ENCODE measurements at regions of chr11 and their contacts with region 1.

Region 1: DNA sequence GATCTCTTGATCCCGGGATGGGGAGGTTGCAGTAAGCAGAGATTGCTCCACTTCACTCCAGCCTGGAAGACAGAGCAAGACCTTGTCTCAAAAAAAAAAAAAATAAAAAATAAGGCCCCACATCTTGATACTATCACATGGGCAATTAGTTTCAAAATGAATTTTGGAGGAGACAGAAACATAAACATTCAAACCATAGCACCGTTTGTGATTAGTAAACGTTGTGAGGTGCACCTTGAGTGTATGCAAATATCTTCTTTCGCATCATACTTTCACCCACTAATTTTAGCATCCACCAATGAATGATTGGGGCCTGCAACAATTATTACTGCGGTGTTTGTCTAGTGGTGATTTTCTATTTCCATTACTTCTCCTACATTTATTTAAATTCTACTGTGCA is 11.0 kb upstream of the SPDYC start:
- DNase-seq: no peak
- ATAC-seq: no peak
- H3K4me3 ChIP-seq: no peak overlapping the region
- H3K27ac ChIP-seq: no peak overlapping the region
- H3K4me1 ChIP-seq: no peaks in the 10 kb centered on the region
- H3K27me3 ChIP-seq: no peaks in the 10 kb centered on the region
- CTCF ChIP-seq: no peak

Region 2: DNA sequence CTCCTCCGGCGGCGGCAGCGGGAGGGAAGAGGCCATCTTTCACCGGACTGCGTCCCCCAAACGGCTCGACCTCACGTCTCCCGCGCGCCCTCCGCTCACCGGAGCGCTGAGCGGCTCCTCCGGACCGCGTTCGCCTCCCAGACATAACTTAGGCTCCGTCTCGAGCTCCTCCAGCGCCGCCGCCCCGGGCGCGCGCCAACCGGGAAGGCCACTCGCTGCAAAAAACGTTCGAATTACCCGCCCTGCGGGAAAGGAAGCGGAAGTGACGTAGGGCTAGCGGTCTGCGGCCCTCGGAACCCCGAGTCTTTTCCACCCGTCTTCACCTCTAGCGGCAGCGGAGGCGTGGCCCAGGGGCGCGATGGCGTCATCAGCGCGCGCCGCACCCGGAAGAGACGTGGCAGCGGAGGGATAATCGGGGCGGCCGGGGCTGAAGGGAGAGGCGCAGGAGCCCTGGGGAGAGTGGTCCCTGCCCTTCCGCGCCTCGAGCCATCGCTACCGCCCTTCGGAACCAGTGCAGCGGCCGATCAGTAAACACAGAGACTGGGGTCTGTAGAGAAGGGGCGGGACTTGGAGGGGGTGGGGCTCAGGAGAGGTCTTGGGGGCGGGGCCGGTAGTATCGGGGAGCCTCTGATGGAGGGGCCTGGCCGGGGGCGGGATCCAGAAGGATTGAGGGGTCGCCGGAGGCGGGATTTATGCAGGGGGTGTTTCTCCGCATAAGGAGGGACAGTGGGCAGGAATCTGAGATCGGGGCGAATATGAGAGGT is 75.0 kb before region 1 on chr11 and contains the starts of genes CDCA5 and ZFPL1:
- CTCF ChIA-PET with region 1: no interaction called
- POLR2A ChIA-PET with region 1: interaction called, 13 read pairs
- in situ Hi-C with region 1: no loop called
- intact Hi-C with region 1: no loop called
- DNase-seq: peak; percentile 73
- ATAC-seq: peak; percentile 98
- H3K4me3 ChIP-seq: peak within 1 kb of the TSS; percentile 81 to 99
- H3K27ac ChIP-seq: peak within 1 kb of the TSS; percentile 96
- H3K4me1 ChIP-seq: peaks cover 20% of the 10 kb centered on the region
- H3K27me3 ChIP-seq: no peaks in the 10 kb centered on the region
- CTCF ChIP-seq: no peak
- total RNA-seq, gene CDCA5: 92.9 TPM
- total RNA-seq, gene ZFPL1: 68.4 TPM

Region 3: DNA sequence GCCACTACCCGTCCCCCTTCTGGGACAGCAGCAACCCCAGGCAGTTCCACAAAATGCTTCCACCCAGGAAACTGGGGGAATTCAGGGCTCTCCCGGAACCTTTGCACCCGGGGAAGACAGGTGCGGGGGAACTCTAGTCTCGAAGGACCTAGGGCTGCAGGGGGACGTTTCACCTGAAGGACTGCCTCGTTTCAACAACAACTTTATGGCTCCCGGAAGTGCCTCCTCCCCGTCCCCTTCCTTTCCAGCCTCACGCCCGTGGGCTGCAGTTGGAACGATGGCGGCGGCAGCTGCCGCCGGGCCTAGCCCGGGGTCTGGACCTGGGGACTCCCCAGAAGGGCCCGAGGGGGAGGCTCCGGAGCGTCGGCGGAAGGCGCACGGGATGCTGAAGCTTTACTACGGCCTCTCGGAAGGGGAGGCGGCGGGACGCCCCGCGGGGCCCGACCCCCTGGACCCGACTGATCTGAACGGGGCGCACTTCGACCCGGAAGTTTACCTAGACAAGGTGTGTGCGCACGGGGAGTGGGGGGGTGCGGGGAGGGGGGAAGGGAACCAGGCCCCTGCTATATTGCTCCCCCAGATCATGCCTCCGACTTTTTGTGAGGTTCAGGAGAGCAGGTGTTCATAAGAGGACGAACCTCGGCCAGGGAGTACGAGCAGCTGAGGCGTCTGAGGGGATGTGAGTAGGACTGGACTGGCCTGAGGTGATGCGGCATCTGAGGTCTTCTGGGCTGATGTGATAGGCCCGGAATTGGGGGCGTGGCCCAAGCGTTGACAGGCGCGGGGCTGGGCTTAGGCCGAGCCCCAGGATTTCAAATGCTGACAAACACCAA is 62.8 kb before region 1 on chr11 and contains the start of gene VPS51:
- CTCF ChIA-PET with region 1: no interaction called
- POLR2A ChIA-PET with region 1: interaction called, 12 read pairs
- in situ Hi-C with region 1: no loop called
- intact Hi-C with region 1: no loop called
- DNase-seq: no peak
- ATAC-seq: peak; percentile 97
- H3K4me3 ChIP-seq: peak within 1 kb of the TSS; percentile 63 to 88
- H3K27ac ChIP-seq: peak within 1 kb of the TSS; percentile 80
- H3K4me1 ChIP-seq: peaks cover 5% of the 10 kb centered on the region
- H3K27me3 ChIP-seq: no peaks in the 10 kb centered on the region
- CTCF ChIP-seq: no peak
- total RNA-seq, gene VPS51: 101 TPM

Region 4: DNA sequence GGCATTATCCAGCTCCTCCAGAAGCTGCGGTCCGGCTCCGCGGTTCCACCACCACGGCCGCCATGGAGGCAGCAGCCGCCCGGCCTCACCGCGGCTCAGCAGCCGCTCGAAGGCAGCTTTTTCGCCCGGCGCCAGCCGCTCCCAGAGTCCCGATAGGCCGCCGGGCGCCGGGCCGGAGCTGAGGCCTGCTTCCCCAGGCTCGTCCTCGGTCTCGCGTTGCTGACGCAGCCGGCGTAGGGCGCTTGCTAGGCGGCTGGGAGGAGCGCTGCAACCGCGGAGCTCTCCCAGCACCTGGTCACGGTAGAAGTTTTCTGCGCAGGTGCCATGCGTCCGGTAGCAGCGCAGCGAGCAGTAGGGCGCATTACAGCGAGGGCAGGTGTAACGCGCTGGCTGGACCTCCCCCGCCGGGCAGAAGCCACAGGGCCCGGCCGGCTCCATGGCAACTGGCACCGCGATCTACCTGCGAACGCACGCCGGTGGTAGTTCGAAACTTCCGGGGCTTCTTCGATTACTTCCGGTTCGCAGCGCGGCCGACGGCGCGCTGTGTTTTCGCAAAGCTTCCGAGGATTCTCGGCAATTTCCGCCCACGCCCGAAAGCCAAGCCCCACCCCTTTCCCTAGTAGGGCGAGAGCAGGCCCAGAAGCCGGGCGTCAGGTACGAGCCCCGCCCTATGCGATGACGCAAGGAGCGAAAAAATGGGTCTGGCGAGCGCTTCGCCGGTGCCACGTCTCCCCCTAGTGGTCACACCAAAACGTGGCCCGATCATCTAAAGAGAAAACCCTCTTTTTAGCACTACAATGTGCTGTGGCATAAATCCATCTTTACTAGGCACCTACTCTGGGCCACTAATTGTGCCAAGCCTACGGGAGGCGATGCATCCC is 41.6 kb before region 1 on chr11 and contains the start of gene ZNHIT2:
- CTCF ChIA-PET with region 1: no interaction called
- POLR2A ChIA-PET with region 1: no interaction called
- in situ Hi-C with region 1: no loop called
- intact Hi-C with region 1: no loop called
- DNase-seq: peak; percentile 99
- ATAC-seq: peak; percentile 77
- H3K4me3 ChIP-seq: peak within 1 kb of the TSS; percentile 70 to 78
- H3K27ac ChIP-seq: peak within 1 kb of the TSS; percentile 89
- H3K4me1 ChIP-seq: peaks cover 33% of the 10 kb centered on the region
- H3K27me3 ChIP-seq: no peaks in the 10 kb centered on the region
- CTCF ChIP-seq: peak; percentile 99
- total RNA-seq, gene ZNHIT2: 27.1 TPM

Region 5: DNA sequence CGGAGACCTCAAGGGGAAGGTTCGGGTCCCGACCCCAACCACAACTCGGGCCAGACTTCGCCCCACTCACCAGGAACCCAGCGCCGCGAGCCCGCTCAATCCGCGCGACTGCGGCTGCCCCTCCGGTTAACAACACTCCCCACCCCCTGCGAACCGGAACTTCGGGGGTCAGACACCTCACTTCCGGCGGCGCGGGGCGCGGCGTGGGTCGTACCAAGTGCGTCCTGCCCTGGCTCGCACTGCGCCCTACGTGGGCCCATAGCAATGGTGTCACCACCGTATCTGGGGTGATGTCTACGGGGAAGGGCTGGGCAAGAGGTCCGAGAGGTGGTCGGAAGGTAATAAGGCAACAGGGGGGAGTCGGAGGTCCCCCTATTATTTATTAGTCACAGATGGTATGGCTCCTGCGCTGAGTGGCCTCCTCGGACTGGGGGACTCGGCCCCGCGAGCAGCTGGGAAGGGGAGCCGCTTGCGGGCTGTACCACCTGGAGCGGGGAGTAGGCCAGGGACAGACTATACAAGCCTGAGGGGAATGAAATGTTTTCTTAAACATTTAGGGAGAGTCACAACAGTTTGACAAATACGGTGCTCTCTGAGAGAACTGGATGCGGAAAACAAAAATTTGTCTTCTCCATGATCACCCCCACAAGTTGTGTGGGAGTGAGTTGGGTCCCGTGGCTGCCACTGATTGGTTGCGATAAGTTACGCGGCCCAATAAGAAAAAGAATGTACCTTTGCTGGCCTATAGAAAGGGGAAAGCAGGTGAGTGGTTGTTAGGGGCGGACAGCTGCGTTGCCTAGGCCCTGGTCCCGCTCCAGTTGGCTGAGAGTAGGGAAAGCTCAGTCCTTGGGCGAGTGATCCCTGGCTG is 24.4 kb before region 1 on chr11 and contains the start of gene SYVN1:
- CTCF ChIA-PET with region 1: no interaction called
- POLR2A ChIA-PET with region 1: interaction called, 10 read pairs
- in situ Hi-C with region 1: no loop called
- intact Hi-C with region 1: no loop called
- DNase-seq: peak; percentile 95
- ATAC-seq: peak; percentile 93
- H3K4me3 ChIP-seq: peak within 1 kb of the TSS; percentile 91 to 96
- H3K27ac ChIP-seq: peak within 1 kb of the TSS; percentile 99
- H3K4me1 ChIP-seq: peaks cover 16% of the 10 kb centered on the region
- H3K27me3 ChIP-seq: no peaks in the 10 kb centered on the region
- CTCF ChIP-seq: no peak
- total RNA-seq, gene SYVN1: 64.3 TPM

Measured in Panc1 (cell line).